PC-9 (cell line): ENCODE measurements at regions of chr3 and their contacts with region 1.

Region 1: DNA sequence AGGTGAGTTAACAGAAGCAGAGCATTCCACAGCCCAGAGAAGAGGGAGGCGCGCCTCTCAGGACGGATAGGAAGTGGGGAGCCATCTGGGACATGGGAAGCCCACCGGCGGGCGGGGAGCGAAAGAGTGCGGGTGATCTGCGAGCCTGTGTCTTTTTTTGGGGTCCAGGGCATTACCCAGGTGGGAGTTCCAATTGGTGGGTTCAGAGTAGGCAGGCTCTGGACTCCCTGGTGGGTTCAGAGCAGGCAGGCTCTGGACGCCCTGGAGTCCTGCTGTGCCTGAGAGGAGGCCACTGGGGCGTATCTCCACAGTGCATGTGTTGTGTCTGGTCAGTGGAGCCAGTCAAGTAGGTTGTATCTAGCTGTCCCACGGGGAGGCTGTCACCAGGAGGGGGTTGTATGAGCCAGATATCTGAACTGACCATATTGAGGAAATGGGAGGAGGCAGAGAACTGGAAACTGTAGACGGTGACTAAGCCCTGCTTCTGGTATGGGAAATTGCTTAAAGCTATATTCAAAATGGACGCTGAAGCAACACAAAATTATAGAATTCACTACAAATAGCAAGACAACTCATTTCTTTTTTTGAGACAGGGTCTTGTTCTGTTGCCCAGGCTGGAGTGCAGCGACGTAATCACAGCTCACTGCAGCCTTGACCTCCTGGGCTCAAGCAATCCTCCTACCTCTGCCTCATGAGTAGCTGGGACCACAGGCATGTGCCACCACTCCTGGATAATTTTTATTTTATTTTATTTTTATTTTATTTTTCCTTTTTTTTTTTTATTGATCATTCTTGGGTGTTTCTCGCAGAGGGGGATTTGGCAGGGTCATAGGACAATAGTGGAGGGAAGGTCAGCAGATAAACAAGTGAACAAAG is 34.5 kb upstream of the CHST2 start:
- DNase-seq: peak in 1 of 2 experiments; percentile 5
- H3K4me3 ChIP-seq: no peak overlapping the region
- H3K27ac ChIP-seq: no peak overlapping the region
- H3K4me1 ChIP-seq: no peaks in the 10 kb centered on the region
- H3K27me3 ChIP-seq: no peaks in the 10 kb centered on the region
- CTCF ChIP-seq: no peak

Region 2: DNA sequence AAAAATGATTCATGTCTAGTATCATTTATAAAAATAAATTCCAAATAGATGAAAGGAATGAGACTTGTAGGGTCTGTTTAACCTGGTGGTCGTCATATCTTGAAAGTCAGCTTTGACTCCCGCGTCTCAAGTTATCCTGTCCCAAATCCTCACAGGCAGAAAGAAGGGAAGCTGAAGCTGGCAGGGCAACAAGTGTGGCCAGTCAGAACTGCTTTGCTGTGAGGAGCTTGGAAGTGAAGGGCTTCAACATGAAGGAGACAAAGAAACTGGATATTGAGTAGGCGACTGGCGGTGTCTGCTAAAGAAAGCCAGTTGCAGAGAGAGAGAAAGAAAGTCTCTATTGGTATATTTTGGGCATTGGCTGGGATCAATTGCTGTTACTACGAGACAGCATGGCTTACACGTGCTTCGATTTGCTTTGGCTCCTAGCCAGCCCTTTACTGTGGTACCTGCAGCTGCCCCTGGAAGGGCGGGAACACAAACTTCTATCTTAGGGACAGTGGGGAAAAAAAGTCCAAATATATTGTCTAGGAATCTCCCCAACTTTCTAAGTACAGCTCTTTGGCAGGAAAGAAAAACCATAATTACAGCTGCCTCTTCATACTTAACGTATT is 141.7 kb after region 1 on chr3:
- CTCF ChIA-PET with region 1: no interaction called
- POLR2A ChIA-PET with region 1: no interaction called
- intact Hi-C with region 1: no loop called
- DNase-seq: no peak
- H3K4me3 ChIP-seq: no peak overlapping the region
- H3K27ac ChIP-seq: no peak overlapping the region
- H3K4me1 ChIP-seq: no peaks in the 10 kb centered on the region
- H3K27me3 ChIP-seq: no peaks in the 10 kb centered on the region
- CTCF ChIP-seq: no peak

Region 3: DNA sequence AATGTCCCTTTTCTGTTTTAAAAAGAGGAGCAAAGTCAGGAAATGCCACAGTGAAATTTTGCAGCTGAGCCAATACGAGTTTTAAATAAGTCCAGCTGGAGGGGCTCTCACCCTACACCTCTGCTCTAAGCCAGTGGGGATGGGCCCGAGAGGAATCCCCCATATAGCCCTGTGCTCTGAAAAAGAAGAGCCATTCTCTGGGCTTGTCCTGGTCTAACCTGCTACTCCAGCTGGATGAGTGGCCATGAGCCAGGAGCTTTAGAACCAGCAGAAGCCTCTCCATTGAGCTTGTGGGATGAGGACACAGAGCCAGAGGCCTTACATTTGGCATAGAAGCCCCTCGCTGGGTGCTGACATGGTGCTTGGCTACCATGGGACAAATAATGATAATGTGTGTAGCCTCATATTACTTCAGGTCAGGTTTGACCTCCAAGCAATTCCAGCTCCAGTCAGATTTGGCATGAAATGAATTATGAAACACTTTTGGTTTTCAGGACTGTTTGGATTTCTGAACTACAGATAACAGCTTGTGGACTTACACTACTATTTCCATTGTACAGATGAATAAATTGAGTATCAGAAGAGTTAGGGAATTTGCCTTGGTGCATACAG is 206.8 kb after region 1 on chr3:
- CTCF ChIA-PET with region 1: no interaction called
- POLR2A ChIA-PET with region 1: interaction called, 15 read pairs
- intact Hi-C with region 1: no loop called
- DNase-seq: no peak
- H3K4me3 ChIP-seq: no peak overlapping the region
- H3K27ac ChIP-seq: no peak overlapping the region
- H3K4me1 ChIP-seq: no peaks in the 10 kb centered on the region
- H3K27me3 ChIP-seq: no peaks in the 10 kb centered on the region
- CTCF ChIP-seq: no peak

Region 4: DNA sequence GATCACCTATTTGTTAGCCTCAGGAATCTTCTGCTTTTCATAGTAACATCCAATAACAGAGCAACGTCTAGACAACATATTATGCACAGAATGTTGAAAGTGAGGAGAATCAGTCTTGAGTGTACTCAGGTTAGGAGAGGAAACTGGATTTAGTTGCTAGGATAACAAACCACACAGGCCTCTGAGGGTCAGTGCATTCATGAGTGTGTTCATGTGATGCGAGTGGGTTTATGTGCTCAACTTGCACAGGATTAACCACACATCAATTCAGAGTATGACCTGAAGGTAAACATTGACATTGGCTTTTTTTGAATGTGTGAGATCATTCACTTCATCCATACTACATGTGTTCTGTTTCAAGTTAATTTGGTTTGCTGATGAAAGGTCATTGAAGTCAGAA is 1174.2 kb after region 1 on chr3:
- CTCF ChIA-PET with region 1: no interaction called
- POLR2A ChIA-PET with region 1: no interaction called
- intact Hi-C with region 1: no loop called
- DNase-seq: no peak
- H3K4me3 ChIP-seq: no peak overlapping the region
- H3K27ac ChIP-seq: no peak overlapping the region
- H3K4me1 ChIP-seq: no peaks in the 10 kb centered on the region
- H3K27me3 ChIP-seq: no peaks in the 10 kb centered on the region
- CTCF ChIP-seq: no peak

Region 5: DNA sequence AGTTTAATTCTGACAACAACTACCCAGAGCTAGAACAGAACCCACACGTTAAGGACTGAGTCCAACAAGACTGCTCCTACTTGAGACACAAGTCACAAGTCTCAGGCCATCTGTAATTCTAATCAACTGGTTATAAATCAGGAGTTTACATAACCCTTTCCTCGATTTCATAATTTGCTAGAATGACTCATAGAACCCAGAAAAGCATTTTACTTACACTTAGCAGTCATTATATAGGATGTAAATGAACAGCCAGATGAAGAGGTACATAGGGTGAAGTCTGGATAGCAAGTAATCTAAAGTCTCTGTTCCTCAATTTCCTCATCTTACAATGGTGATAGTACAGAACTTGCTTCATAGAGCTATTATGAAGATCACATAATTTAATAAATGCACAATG is 1904.7 kb after region 1 on chr3:
- CTCF ChIA-PET with region 1: no interaction called
- POLR2A ChIA-PET with region 1: no interaction called
- intact Hi-C with region 1: no loop called
- DNase-seq: no peak
- H3K4me3 ChIP-seq: no peak overlapping the region
- H3K27ac ChIP-seq: no peak overlapping the region
- H3K4me1 ChIP-seq: no peaks in the 10 kb centered on the region
- H3K27me3 ChIP-seq: no peaks in the 10 kb centered on the region
- CTCF ChIP-seq: no peak